ENCODE measurements at regions of chr18 and their contacts with region 1.

Region 1: GRCh38 chr18:55781481-55781957 is 193.5 kb upstream of the TCF4 start:
- DNase-seq: no peak

Region 2: DNA sequence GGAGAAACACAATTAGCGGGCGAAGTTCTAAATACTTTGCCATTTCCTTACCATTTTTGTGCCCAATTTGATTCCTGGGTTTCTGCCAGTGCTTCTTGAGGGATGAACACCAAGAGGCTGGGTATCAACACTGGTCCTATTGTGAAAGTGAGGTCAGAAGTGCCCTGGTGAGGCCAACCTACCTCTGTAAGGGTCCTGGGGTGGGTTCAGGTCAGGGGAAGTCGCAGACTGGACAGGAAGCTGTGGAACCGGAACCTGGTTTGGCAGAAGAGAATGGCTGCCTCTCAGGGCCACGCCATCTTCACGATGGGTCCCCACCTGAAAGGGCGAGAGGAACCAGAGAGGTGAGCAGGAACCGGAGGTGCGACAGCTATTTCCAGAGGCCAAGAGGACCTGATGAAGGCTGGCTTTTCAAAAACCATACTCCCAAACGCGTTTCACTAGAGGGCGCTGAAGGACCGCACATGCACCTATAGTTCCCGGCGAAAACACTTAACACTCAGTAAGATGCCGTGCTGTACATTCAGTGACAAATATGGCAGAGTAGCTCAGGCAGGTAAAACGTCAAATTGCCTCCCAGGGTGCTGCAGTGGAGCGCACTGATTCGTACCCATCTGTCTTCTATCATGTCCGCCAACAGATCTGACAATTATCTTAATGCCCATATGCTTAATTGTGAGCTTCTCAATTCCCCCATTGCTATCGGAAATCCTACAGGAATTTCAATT is 547.0 kb before region 1 on chr18:
- intact Hi-C with region 1: loop called (anchors 5 kb)
- DNase-seq: peak; percentile 76

Region 3: GRCh38 chr18:55343396-55344073 is 438.0 kb before region 1 on chr18:
- intact Hi-C with region 1: loop called (anchors 5 kb)
- DNase-seq: no peak

Region 4: DNA sequence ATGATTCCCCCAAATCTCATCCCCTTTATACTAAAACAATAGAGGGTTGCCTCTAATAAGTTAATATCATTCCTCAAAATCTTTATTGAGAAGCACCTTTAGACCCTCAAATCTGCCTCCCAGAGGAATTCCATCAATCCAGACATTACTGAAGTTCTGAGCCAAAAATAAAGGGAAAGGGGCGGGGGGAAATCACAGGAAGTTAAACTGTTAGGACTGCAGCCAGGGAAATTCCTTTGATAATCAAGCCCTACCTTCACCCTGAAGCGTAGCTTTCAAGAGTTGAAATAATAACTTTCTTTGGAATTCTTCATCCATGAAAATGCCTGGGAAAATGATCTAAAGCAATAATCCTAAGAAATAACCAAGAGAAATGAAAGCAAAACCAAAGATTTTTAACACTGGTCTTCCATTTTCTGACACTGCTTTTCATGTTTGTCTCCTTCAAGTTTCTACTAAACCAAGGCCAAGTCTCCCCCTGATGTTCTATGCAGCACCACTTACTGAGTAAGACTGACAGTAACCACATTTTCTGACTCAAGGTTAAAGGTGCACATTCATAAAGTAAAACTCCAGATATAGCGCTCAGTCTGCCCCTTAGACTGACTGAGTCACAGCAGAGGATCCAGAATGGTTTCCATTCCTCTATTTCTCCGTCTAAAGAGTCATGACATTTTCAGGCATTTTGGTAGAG is 271.7 kb before region 1 on chr18:
- intact Hi-C with region 1: loop called (anchors 5 kb)
- DNase-seq: no peak

Region 5: DNA sequence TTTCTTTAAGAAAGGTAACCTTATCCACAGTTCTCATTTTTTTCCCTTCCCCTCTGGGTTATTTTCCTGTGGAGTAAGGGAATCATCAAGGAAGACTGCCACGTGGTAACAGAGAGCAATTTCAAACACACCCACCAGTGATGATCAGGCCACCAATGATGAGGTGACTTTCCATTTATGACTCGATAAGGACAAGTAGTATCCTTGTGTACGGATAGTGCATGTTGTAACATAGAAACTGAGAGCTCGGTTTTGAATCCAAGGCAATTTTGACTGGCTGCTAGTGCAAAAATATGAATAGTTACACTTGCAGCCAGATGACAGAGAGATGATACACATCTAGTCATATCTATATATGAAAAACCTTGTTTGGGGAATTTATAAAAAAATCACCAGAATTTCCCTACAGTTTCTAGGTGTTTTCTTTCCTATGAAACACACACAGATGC is 49.9 kb before region 1 on chr18:
- intact Hi-C with region 1: loop called (anchors 1 kb)
- DNase-seq: no peak

Region 6: GRCh38 chr18:55853268-55853667 is 71.7 kb after region 1 on chr18:
- intact Hi-C with region 1: no loop called
- DNase-seq: no peak

Region 7: GRCh38 chr18:55878224-55878623 is 96.7 kb after region 1 on chr18:
- intact Hi-C with region 1: no loop called
- DNase-seq: no peak

Region 8: DNA sequence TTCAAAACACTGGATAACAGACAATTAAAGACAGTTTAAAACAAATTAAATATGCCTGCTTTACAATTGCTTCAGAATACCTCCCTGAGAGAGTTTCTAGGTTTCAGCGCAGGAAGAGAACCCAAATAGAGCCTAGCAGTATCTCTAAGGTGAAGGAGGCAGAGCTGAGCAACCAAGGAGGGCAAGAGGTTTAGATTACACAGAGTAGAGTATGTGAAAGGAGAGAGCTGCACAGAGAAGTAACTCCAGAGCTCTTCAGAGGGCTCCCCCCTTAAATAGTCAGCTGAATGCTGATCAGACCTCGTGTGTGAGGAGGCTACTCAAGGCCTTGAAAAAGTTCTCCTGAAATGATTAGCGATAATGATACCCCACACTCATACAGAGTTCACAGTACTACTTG is 193.0 kb after region 1 on chr18:
- intact Hi-C with region 1: no loop called
- DNase-seq: no peak

Region 9: GRCh38 chr18:55988537-55988936 is 207.0 kb after region 1 on chr18:
- intact Hi-C with region 1: loop called (anchors 10 kb)
- DNase-seq: no peak